K562 (cell line): ENCODE measurements at regions of chr6 and their contacts with region 1.

Region 1: GRCh38 chr6:116531675-116532570 is 13.6 kb downstream of the TRAPPC3L start:
- DNase-seq: peak; percentile 63 to 78 (median 66)
- ATAC-seq: peak; percentile 88
- H3K4me3 ChIP-seq: no peak overlapping the region
- H3K27ac ChIP-seq: no peak overlapping the region
- H3K4me1 ChIP-seq: peaks cover 0 to 2% of the 10 kb centered on the region in 2 experiments; a peak in 1 of 5 replicates
- H3K27me3 ChIP-seq: peaks cover 0 to 4% of the 10 kb centered on the region in 2 experiments; a peak in 2 of 5 replicates
- CTCF ChIP-seq: peak; percentile 79 to 86 (median 84)
- EP300 ChIP-seq: no peak
- POLR2A ChIP-seq: no peak
- RAD21 ChIP-seq: peak; percentile 64 to 88

Region 2: DNA sequence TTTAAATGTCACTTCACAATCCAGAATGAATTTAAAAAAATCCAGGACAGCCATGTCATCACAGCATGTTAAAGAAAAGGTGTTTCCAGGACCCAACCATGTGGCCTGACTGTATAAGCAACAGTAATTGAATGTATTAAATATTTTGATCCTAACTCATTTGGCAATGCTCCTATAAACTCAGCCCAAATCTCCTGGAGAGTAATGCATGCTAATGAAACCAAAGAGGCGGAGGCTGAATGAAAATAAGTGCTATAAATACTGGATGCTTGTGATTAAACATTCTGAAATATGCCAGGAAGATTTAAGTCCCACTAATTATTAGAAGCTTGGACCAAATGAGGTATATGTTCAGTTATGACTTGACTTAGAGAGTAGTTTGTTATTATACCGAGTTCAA is 958.1 kb before region 1 on chr6:
- CTCF ChIA-PET with region 1: no interaction called
- POLR2A ChIA-PET with region 1: no interaction called
- in situ Hi-C with region 1: no loop called
- intact Hi-C with region 1: no loop called
- DNase-seq: no peak
- ATAC-seq: no peak
- H3K4me3 ChIP-seq: no peak overlapping the region
- H3K27ac ChIP-seq: no peak overlapping the region
- H3K4me1 ChIP-seq: no peaks in the 10 kb centered on the region
- H3K27me3 ChIP-seq: no peaks in the 10 kb centered on the region
- CTCF ChIP-seq: no peak
- EP300 ChIP-seq: no peak
- POLR2A ChIP-seq: no peak
- RAD21 ChIP-seq: no peak

Region 3: GRCh38 chr6:116165596-116165995 is 366.3 kb before region 1 on chr6:
- CTCF ChIA-PET with region 1: no interaction called
- POLR2A ChIA-PET with region 1: no interaction called
- in situ Hi-C with region 1: no loop called
- intact Hi-C with region 1: no loop called
- DNase-seq: no peak
- ATAC-seq: no peak
- H3K4me3 ChIP-seq: no peak overlapping the region
- H3K27ac ChIP-seq: no peak overlapping the region
- H3K4me1 ChIP-seq: peaks cover 0 to 8% of the 10 kb centered on the region in 2 experiments; a peak in 3 of 5 replicates
- H3K27me3 ChIP-seq: no peaks in the 10 kb centered on the region
- CTCF ChIP-seq: no peak
- EP300 ChIP-seq: no peak
- POLR2A ChIP-seq: no peak
- RAD21 ChIP-seq: no peak

Region 4: GRCh38 chr6:116287689-116288282 is 244.1 kb before region 1 on chr6:
- CTCF ChIA-PET with region 1: interaction called, 4 read pairs
- POLR2A ChIA-PET with region 1: no interaction called
- in situ Hi-C with region 1: no loop called
- intact Hi-C with region 1: loop called (anchors 1 kb)
- DNase-seq: peak; percentile 27 to 47 (median 44)
- ATAC-seq: peak; percentile 88
- H3K4me3 ChIP-seq: no peak overlapping the region
- H3K27ac ChIP-seq: no peak overlapping the region
- H3K4me1 ChIP-seq: no peaks in the 10 kb centered on the region; a peak in 1 of 5 replicates
- H3K27me3 ChIP-seq: 0 out of 5 replicates have a peak, but pooled peaks cover 0 to 5% of the 10 kb centered on the region in 2 experiments
- CTCF ChIP-seq: peak; percentile 66 to 88 (median 74); a peak in 5 of 6 replicates
- EP300 ChIP-seq: no peak
- POLR2A ChIP-seq: no peak
- RAD21 ChIP-seq: peak; percentile 86 to 90

Region 5: GRCh38 chr6:116511404-116512110 is 20.4 kb before region 1 on chr6 and contains the start of gene CALHM5:
- CTCF ChIA-PET with region 1: no interaction called
- POLR2A ChIA-PET with region 1: interaction called, 5 read pairs
- in situ Hi-C with region 1: no loop called
- intact Hi-C with region 1: loop called (anchors 1 kb)
- DNase-seq: peak; percentile 33 to 75 (median 42)
- ATAC-seq: peak; percentile 92
- H3K4me3 ChIP-seq: no peak within 1 kb of the TSS
- H3K27ac ChIP-seq: no peak within 1 kb of the TSS
- H3K4me1 ChIP-seq: peaks cover 3 to 6% of the 10 kb centered on the region in 2 experiments; a peak in 3 of 5 replicates
- H3K27me3 ChIP-seq: no peaks in the 10 kb centered on the region; a peak in 2 of 5 replicates
- CTCF ChIP-seq: peak; percentile 55 to 84 (median 72)
- EP300 ChIP-seq: peak; percentile 33; the same call in 1 of the 2 replicates
- POLR2A ChIP-seq: no peak
- RAD21 ChIP-seq: peak; percentile 74 to 85
- polyA plus RNA-seq, gene CALHM5: 0.04 TPM in 1 of 2 experiments, not detected in the other

Region 6: DNA sequence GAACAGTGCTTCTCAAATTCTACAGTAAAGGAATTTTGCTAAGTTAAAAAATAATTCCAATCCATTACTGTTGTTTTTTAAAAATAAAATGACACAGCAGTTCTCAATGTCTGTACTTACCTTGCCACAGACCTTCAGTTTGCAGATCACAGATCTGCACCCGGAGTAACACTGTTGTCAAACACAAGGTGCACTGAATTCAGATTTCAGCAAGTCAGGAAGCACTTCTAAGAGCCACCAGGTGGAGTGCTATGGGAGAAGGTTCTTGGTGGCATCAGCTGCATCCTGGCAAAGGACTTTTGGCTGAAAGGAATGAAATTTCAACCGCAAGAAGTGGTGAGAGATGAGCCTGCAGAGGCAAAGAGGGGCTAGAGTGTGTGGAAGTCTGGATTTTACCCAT is 101.8 kb after region 1 on chr6:
- CTCF ChIA-PET with region 1: no interaction called
- POLR2A ChIA-PET with region 1: no interaction called
- in situ Hi-C with region 1: no loop called
- intact Hi-C with region 1: loop called (anchors 5 kb)
- DNase-seq: peak in 2 of 4 experiments; percentile 16 to 25
- ATAC-seq: peak; percentile 61
- H3K4me3 ChIP-seq: no peak overlapping the region
- H3K27ac ChIP-seq: no peak overlapping the region
- H3K4me1 ChIP-seq: peaks cover 0 to 12% of the 10 kb centered on the region in 2 experiments; a peak in 2 of 5 replicates
- H3K27me3 ChIP-seq: no peaks in the 10 kb centered on the region
- CTCF ChIP-seq: peak; percentile 29 to 32 (median 32); a peak in 3 of 6 replicates
- EP300 ChIP-seq: no peak
- POLR2A ChIP-seq: no peak
- RAD21 ChIP-seq: no peak

Region 7: DNA sequence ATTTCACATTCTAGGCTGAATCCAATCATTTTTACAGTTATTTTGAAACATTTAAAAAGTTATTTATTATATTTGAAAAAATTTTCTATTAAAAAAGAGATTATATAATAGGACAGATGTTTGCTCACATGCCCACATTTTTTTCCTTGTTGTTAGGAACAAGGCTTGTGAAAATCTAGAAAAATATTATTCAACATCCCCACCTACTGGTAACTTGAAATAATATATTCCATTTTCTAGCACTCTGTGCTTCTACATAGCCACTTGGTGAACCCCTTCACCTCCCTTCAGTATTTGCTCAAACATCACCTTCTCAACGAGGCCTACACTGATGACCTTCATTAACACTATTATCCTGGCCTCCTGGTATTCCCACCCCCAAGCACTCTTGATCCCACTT is 315.3 kb after region 1 on chr6:
- CTCF ChIA-PET with region 1: interaction called, 3 read pairs
- POLR2A ChIA-PET with region 1: no interaction called
- in situ Hi-C with region 1: no loop called
- intact Hi-C with region 1: loop called (anchors 2 kb)
- DNase-seq: peak in 2 of 4 experiments; percentile 17 to 38
- ATAC-seq: peak; percentile 90
- H3K4me3 ChIP-seq: no peak overlapping the region
- H3K27ac ChIP-seq: no peak overlapping the region
- H3K4me1 ChIP-seq: no peaks in the 10 kb centered on the region
- H3K27me3 ChIP-seq: no peaks in the 10 kb centered on the region
- CTCF ChIP-seq: peak; percentile 28 to 67 (median 33); a peak in 3 of 6 replicates
- EP300 ChIP-seq: no peak
- POLR2A ChIP-seq: no peak
- RAD21 ChIP-seq: peak; percentile 59 to 62